Left cardiac atrium (tissue), 4 donors: ENCODE measurements at regions of chr19 and their contacts with region 1.

Region 1: GRCh38 chr19:46192992-46193650 is 36.4 kb upstream of the IGFL1 start:
- DNase-seq: peak; percentile 51
- ATAC-seq: peak in 1 of 2 donors; percentile 69

Region 2: GRCh38 chr19:46030812-46031550 is 162.1 kb before region 1 on chr19:
- intact Hi-C with region 1: loop called in 1 of 2 experiments (anchors 2 kb)
- DNase-seq: no peak
- ATAC-seq: no peak

Region 3: GRCh38 chr19:46159418-46160232 is 33.5 kb before region 1 on chr19:
- intact Hi-C with region 1: no loop called
- DNase-seq: no peak
- ATAC-seq: no peak